ENCODE measurements at regions of chr7 and their contacts with region 1.

Region 1: DNA sequence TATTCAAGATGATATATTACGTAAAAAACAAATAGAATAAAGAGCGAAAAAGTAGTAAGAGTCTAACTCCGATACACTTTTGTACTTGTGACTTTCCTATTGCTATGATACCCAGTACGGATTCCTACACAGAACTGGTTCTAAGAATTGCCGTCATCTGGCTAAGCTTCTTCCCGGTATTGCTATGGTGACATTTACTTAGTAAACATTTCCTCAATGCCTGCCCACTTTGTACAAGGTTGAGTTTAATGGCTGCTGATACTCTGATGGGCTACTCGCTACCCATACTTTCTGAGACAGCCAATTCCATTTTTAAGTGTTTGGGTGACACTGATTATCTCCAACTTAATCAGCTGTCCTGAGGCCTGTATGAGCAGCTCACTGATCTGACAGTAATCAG is 55.6 kb downstream of the OSBPL3 start:
- DNase-seq: peak in 1 of 9 donors; percentile 10
- ATAC-seq: peak; percentile 54
- H3K4me3 ChIP-seq: no peak overlapping the region
- H3K4me3 Mint-ChIP-seq: peak overlapping the region in 1 of 10 donors; percentile 73
- H3K27ac ChIP-seq: no peak overlapping the region
- H3K27ac Mint-ChIP-seq: peak overlapping the region in 1 of 9 donors; percentile 91
- H3K4me1 ChIP-seq: peaks cover 0 to 16% of the 10 kb centered on the region in 2 donors
- H3K4me1 Mint-ChIP-seq: peaks cover 23 to 89% (median 37%) of the 10 kb centered on the region in 7 donors
- H3K27me3 ChIP-seq: no peaks in the 10 kb centered on the region
- H3K27me3 Mint-ChIP-seq: no peaks in the 10 kb centered on the region

Region 2: GRCh38 chr7:24965831-24966709 is 41.7 kb after region 1 on chr7:
- CTCF ChIA-PET with region 1: no interaction called
- POLR2A ChIA-PET with region 1: no interaction called
- intact Hi-C with region 1: loop called in 1 of 2 experiments (anchors 2 kb)
- DNase-seq: peak in 6 of 9 donors; percentile 13 to 54 (median 18)
- ATAC-seq: peak; percentile 84
- H3K4me3 ChIP-seq: no peak overlapping the region
- H3K4me3 Mint-ChIP-seq: peak overlapping the region; percentile 7 to 69 (median 49)
- H3K27ac ChIP-seq: peak overlapping the region; percentile 2
- H3K27ac Mint-ChIP-seq: peak overlapping the region; percentile 14 to 89 (median 73)
- H3K4me1 ChIP-seq: peaks cover 24 to 55% of the 10 kb centered on the region in 2 donors
- H3K4me1 Mint-ChIP-seq: peaks cover 55 to 75% (median 58%) of the 10 kb centered on the region in 7 donors
- H3K27me3 ChIP-seq: no peaks in the 10 kb centered on the region
- H3K27me3 Mint-ChIP-seq: no peaks in the 10 kb centered on the region

Measured in naive thymus-derived CD4-positive, alpha-beta T cell (primary cell).